Activated T-helper 1 cell treated with anti-CD3 and anti-CD28 coated beads, Interleukin-12 subunit alpha, Interleukin-12 subunit beta, Interleukin-2, Interleukin-4 antibody, amounts not matched to agents 30 ng/mL and 10 ng/mL and 1 ng/mL, durations not matched to agents 14 hours and 24 hours and 36 hours (primary cell): ENCODE measurements at regions of chr9 and their contacts with region 1.

Region 1: DNA sequence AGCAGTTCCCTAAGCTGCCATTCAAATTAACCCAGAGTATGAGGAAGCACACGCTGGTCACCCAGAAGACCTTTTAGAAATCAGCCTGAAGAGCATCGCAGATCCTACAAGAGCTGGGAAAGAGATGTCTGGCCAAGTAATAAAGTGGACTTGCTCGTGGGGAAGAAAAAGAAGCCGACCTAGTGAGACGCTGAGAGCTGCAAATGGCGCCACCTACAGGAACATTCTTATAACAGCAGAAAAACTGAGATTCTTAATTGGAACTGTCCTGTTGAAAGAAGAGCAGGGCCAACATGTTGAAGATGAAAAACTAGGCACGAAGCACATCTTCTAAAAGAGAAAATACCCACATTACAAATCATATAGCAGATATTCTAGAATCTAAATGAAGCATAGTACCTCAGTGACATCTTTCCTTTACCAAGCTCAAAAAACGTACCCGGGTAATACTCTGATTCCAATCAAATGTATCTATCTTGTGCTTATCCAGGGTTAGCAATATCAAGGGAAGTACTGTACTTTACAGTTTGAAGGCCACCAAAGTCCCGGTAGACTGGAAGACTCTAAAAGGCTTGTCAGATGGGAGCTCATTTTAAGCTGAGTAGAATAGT is 3.9 kb upstream of the GNAQ start:
- DNase-seq: peak; percentile 38
- H3K4me3 Mint-ChIP-seq: no peak overlapping the region
- H3K27ac Mint-ChIP-seq: peak overlapping the region; percentile 12
- H3K4me1 Mint-ChIP-seq: peaks cover 37% of the 10 kb centered on the region
- H3K27me3 Mint-ChIP-seq: no peaks in the 10 kb centered on the region

Region 2: DNA sequence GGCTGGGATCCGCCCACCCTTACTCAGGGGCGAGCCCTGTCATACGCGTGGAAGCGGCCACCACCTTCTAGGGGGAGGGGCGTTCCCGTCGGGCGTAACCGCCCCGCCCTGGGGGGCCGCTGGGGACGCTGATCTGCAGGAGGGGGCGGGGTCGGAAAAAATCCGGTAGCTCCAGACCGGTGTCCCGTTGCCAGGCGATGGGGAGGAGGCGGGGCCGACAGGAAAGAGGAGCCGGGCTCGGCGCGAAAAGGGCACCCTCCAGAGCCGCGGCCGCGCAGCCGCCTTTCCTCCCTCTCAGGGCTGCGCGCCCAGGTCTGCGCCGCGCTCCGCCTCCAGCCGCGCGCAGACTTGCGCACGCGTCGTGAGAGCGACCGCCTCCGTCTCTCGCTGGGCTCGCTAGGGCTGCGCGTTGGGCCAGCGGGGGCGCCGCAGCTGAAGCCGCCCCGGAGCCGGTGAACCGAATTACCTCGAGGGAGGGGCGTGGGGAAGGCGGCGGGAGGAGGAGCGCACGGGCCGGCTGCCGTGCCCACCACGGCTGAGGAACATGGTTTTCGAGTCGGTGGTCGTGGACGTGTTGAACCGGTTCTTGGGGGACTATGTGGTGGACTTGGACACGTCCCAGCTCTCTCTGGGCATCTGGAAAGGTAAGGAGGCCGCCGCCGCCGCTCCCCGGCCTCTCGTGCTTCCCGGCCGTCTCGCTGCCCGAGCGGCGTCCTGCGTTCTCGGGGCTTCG is 858.2 kb before region 1 on chr9 and contains the start of gene VPS13A:
- intact Hi-C with region 1: loop called (anchors 5 kb)
- DNase-seq: peak; percentile 88
- H3K4me3 Mint-ChIP-seq: peak within 1 kb of the TSS; percentile 95
- H3K27ac Mint-ChIP-seq: peak within 1 kb of the TSS; percentile 92
- H3K4me1 Mint-ChIP-seq: peaks cover 32% of the 10 kb centered on the region
- H3K27me3 Mint-ChIP-seq: peaks cover 13% of the 10 kb centered on the region
- total RNA-seq, gene VPS13A: 43.7 and 44.2 TPM in 2 replicates

Region 3: DNA sequence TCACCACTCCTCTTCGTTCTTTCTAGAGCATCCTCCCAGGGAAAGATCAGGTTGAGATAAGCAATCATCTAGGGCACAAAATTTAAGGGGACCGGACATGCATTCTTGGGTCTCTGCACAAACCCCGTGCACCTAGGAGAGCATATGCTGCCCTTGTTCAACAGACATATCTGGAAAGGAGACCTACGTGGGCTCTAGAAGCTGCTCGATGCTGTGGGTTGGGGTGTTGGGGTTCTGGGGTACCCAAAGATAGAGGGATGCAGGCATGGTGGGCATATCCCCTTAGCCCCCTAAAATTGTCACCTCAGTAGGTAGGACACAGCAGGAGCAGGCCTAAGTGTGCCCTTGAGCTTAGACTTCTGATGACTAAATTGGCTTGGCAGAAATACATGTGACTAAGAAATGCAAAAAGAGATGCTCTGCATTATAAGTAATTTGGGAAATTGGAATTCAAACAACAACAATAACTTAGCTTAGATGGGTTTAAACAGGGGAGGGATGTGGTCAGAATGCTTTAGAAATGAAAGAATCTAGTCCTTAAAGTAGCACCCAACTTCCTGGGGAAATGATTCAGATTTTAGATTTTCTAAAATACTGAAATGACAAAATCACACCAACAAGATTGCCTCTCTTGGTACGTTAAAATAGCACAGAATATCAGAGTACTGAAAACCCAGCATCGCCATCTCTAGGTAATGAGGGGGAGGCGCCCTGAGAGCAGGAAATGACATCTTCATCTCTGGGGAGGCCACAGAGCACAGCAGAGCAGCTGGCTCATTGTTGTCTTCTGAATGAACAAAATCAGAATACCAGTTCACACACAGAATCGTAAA is 559.6 kb before region 1 on chr9:
- intact Hi-C with region 1: loop called (anchors 5 kb)
- DNase-seq: peak; percentile 54
- H3K4me3 Mint-ChIP-seq: peak overlapping the region; percentile 37
- H3K27ac Mint-ChIP-seq: peak overlapping the region; percentile 86
- H3K4me1 Mint-ChIP-seq: peaks cover 38% of the 10 kb centered on the region
- H3K27me3 Mint-ChIP-seq: no peaks in the 10 kb centered on the region

Region 4: GRCh38 chr9:77751341-77752091 is 284.0 kb before region 1 on chr9:
- intact Hi-C with region 1: loop called (anchors 2 kb)
- DNase-seq: no peak
- H3K4me3 Mint-ChIP-seq: no peak overlapping the region
- H3K27ac Mint-ChIP-seq: no peak overlapping the region
- H3K4me1 Mint-ChIP-seq: peaks cover 26% of the 10 kb centered on the region
- H3K27me3 Mint-ChIP-seq: no peaks in the 10 kb centered on the region

Region 5: DNA sequence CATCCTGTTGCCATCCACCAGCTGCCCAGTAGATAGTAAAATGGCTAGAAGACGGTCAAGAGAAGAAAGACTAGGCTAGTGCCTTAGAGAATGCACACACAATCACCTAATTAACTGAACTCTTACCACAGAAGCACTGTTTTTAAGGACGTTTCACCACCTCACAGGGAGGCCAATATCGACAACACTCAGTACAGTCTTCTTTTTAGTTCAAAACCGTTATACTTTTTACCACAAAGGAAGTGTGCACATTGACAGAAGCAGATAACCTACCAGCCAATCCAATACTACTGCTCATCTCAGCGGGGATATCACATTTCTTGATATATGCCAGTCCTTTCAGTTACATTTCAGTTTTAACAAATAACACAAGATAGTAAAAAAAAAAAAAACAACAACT is 126.2 kb before region 1 on chr9:
- intact Hi-C with region 1: loop called (anchors 5 kb)
- DNase-seq: peak; percentile 26
- H3K4me3 Mint-ChIP-seq: peak overlapping the region; percentile 72
- H3K27ac Mint-ChIP-seq: peak overlapping the region; percentile 94
- H3K4me1 Mint-ChIP-seq: peaks cover 53% of the 10 kb centered on the region
- H3K27me3 Mint-ChIP-seq: no peaks in the 10 kb centered on the region

Region 6: GRCh38 chr9:77965445-77966123 is 69.9 kb before region 1 on chr9:
- intact Hi-C with region 1: no loop called
- DNase-seq: no peak
- H3K4me3 Mint-ChIP-seq: no peak overlapping the region
- H3K27ac Mint-ChIP-seq: no peak overlapping the region
- H3K4me1 Mint-ChIP-seq: peaks cover 30% of the 10 kb centered on the region
- H3K27me3 Mint-ChIP-seq: no peaks in the 10 kb centered on the region

Region 7: GRCh38 chr9:78213712-78214111 is 178.2 kb after region 1 on chr9:
- intact Hi-C with region 1: loop called (anchors 2 kb)
- DNase-seq: no peak
- H3K4me3 Mint-ChIP-seq: no peak overlapping the region
- H3K27ac Mint-ChIP-seq: no peak overlapping the region
- H3K4me1 Mint-ChIP-seq: peaks cover 39% of the 10 kb centered on the region
- H3K27me3 Mint-ChIP-seq: peaks cover 2% of the 10 kb centered on the region

Region 8: DNA sequence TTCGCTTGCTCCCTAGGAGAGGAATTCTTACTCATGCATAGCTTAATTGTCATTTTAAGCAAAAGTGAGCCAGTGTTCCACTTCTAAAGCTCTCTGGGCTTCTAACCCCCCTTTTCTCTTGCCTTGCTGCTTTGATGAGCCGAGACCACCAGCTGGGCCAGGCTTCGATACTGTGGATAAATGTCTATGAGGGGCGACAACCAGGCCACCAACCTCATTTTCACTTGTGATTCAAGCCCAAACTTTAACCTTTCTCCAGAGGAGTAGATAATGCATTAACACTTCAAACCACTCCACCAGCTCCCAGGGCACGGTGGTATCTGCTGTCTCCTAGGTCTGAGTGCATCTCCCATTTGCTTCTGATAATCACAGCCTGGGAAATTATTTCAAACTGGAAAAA is 467.1 kb after region 1 on chr9:
- intact Hi-C with region 1: no loop called
- DNase-seq: no peak
- H3K4me3 Mint-ChIP-seq: no peak overlapping the region
- H3K27ac Mint-ChIP-seq: no peak overlapping the region
- H3K4me1 Mint-ChIP-seq: no peaks in the 10 kb centered on the region
- H3K27me3 Mint-ChIP-seq: no peaks in the 10 kb centered on the region

Region 9: GRCh38 chr9:79571309-79572031 is 1536.0 kb after region 1 on chr9 and contains the start of gene TLE4:
- intact Hi-C with region 1: loop called (anchors 5 kb)
- DNase-seq: peak; percentile 100
- H3K4me3 Mint-ChIP-seq: peak within 1 kb of the TSS; percentile 70
- H3K27ac Mint-ChIP-seq: no peak within 1 kb of the TSS
- H3K4me1 Mint-ChIP-seq: peaks cover 36% of the 10 kb centered on the region
- H3K27me3 Mint-ChIP-seq: peaks cover 16% of the 10 kb centered on the region
- total RNA-seq, gene TLE4: 25.1 and 25.4 TPM in 2 replicates